Activated CD4-positive, alpha-beta T cell treated with anti-CD3 and anti-CD28 coated beads for 36 hours (primary cell): ENCODE measurements at regions of chr3 and their contacts with region 1.

Region 1: GRCh38 chr3:16319307-16319706 is 54.3 kb downstream of the OXNAD1 start:
- DNase-seq: peak; percentile 94
- ATAC-seq: peak; percentile 94
- H3K4me3 Mint-ChIP-seq: peak overlapping the region; percentile 3
- H3K27ac Mint-ChIP-seq: peak overlapping the region; percentile 90
- H3K4me1 Mint-ChIP-seq: peaks cover 74% of the 10 kb centered on the region
- H3K27me3 Mint-ChIP-seq: no peaks in the 10 kb centered on the region

Region 2: GRCh38 chr3:15743587-15744009 is 575.7 kb before region 1 on chr3:
- CTCF ChIA-PET with region 1: no interaction called
- POLR2A ChIA-PET with region 1: no interaction called
- intact Hi-C with region 1: no loop called
- DNase-seq: no peak
- ATAC-seq: no peak
- H3K4me3 Mint-ChIP-seq: no peak overlapping the region
- H3K27ac Mint-ChIP-seq: no peak overlapping the region
- H3K4me1 Mint-ChIP-seq: peaks cover 39% of the 10 kb centered on the region
- H3K27me3 Mint-ChIP-seq: no peaks in the 10 kb centered on the region

Region 3: DNA sequence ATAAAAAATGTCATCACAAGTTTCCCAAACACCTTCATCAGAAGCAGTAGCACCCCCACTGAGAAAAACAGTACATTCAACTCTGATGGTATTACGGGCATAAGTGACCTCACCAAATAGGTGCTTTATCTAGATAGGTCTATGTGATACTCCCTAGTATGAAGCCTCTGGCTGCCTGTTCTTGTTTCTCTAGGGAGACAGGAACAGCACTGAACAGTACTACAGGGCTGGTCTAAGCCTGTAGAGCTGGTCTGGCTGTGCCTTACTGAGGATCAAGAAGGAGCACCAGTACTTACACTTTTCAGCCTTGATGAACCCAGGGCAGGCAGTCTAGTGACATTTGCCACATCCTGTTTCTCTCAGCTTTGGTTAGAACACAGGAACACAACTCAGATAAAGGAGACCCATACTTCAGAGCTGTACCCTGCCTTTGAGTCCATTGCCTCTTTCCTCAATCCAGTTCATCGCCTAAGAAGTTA is 18.4 kb before region 1 on chr3:
- CTCF ChIA-PET with region 1: interaction called, 262 read pairs
- POLR2A ChIA-PET with region 1: no interaction called
- intact Hi-C with region 1: loop called in 1 of 2 experiments (anchors 2 kb)
- DNase-seq: peak; percentile 53
- ATAC-seq: peak; percentile 55
- H3K4me3 Mint-ChIP-seq: peak overlapping the region; percentile 66
- H3K27ac Mint-ChIP-seq: peak overlapping the region; percentile 96
- H3K4me1 Mint-ChIP-seq: peaks cover 98% of the 10 kb centered on the region
- H3K27me3 Mint-ChIP-seq: no peaks in the 10 kb centered on the region

Region 4: DNA sequence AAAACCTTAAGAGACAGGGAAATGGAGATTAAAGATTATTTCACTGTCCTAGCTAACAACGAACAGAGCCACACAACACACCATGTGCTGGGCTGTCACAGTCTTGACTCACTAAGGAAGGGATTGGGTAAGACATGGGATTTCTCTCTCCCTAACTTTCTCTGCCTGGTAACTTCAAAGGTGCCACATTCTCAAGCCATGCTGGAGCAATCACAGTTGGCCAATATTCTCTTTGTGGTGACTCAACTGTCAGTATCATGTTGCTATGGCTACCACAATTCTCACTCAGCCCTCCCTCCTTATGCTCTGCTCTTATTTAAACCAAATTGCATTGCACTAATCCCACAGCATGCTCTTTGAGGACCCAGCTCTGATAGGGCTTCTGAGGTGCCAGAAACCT is 19.7 kb after region 1 on chr3:
- CTCF ChIA-PET with region 1: interaction called, 14 read pairs
- POLR2A ChIA-PET with region 1: no interaction called
- intact Hi-C with region 1: no loop called
- DNase-seq: peak; percentile 35
- ATAC-seq: peak; percentile 80
- H3K4me3 Mint-ChIP-seq: no peak overlapping the region
- H3K27ac Mint-ChIP-seq: peak overlapping the region; percentile 84
- H3K4me1 Mint-ChIP-seq: peaks cover 62% of the 10 kb centered on the region
- H3K27me3 Mint-ChIP-seq: no peaks in the 10 kb centered on the region

Region 5: DNA sequence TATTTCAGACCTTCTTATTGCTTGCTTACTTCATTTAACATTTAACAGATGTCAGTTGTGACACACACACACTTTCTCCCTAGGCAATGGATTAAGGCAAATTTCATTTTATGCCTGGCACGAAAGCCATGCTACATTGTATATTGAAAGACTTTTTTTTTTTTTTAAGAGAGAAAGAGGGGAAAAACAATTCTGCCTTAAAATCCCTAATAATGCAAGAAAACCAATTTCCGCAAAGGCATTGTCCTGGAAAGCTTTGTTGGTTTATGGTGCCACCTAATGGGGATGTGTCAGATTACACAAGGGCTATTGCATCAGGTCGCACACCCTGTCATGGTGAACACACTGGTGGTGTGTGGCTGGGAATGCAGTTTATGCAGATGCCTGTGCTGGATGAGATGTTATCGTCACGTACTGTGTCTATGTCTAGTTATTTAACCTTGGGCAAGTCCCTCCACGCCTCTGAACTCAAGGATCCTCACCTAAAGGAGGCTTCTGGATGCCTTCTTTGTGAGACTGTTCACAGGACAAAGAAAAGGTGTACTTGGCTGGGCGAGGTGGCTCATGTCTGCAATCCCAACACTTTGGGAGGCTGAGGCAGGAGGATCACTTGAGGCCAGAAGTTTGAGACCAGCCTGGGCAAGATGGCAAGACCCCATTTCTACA is 231.5 kb after region 1 on chr3:
- CTCF ChIA-PET with region 1: interaction called, 4 read pairs
- POLR2A ChIA-PET with region 1: no interaction called
- intact Hi-C with region 1: loop called (anchors 1 kb)
- DNase-seq: peak; percentile 87
- ATAC-seq: peak; percentile 99
- H3K4me3 Mint-ChIP-seq: no peak overlapping the region
- H3K27ac Mint-ChIP-seq: peak overlapping the region; percentile 93
- H3K4me1 Mint-ChIP-seq: peaks cover 14% of the 10 kb centered on the region
- H3K27me3 Mint-ChIP-seq: no peaks in the 10 kb centered on the region